ENCODE measurements at regions of chr20 and their contacts with region 1.

Region 1: DNA sequence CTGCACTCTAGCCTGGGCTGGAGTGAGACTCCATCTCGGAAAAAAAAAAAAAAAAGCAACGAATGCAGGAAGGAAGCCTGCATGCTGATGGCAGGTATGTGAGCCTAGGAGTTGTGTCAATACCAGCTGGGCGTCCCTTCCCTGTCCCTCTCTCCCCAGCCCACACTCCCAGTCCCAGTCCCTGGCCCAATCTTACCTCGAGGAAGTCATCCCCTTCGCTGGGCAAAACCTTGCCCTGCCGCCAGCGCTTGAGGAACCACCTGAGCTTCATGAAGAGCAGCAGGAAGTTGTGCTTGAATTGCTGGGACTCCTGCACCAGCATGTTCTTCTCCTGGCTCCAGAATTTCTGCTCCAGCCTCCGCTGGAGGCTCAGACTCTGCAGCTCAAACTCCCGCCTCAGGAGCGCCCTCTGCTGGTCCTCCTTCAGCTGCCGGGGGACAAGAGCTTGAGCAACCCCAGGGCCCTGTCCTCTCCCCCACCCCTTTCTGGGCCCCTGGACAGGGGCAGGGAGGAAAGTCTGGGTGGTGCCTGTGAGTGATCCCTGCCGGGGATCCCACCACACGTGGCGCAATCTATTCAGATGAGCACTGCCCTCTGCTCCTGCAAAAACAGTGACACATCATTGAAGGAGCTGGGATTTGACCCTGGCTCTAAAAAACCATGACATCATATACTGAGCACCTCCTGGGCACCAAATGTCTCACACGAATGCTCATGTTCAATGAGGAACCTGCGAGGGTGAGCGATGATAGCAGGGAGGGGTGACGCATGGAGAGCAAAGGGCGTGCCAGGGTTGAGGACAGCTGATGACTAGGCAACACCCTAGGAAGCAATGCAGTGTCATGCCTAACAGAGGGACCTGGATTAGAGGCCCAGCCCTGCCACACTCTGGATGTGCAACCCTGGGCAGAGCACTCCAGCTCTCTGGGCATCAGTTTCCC is 35.0 kb upstream of the DSN1 start:
- DNase-seq: peak; percentile 81 to 84
- H3K4me3 ChIP-seq: no peak overlapping the region
- H3K4me3 Mint-ChIP-seq: no peak overlapping the region
- H3K27ac Mint-ChIP-seq: no peak overlapping the region
- H3K4me1 ChIP-seq: peaks cover 5% of the 10 kb centered on the region; the same call in 1 of the 2 replicates
- H3K4me1 Mint-ChIP-seq: peaks cover under 1% of the 10 kb centered on the region
- H3K27me3 ChIP-seq: no peaks in the 10 kb centered on the region
- H3K27me3 Mint-ChIP-seq: no peaks in the 10 kb centered on the region
- CTCF ChIP-seq: peak; percentile 92 to 98

Region 2: GRCh38 chr20:36682311-36682710 is 126.3 kb before region 1 on chr20:
- CTCF ChIA-PET with region 1: no interaction called
- POLR2A ChIA-PET with region 1: no interaction called
- intact Hi-C with region 1: no loop called
- DNase-seq: no peak
- H3K4me3 ChIP-seq: no peak overlapping the region
- H3K4me3 Mint-ChIP-seq: no peak overlapping the region
- H3K27ac Mint-ChIP-seq: no peak overlapping the region
- H3K4me1 ChIP-seq: no peaks in the 10 kb centered on the region
- H3K4me1 Mint-ChIP-seq: peaks cover 5% of the 10 kb centered on the region
- H3K27me3 ChIP-seq: no peaks in the 10 kb centered on the region
- H3K27me3 Mint-ChIP-seq: no peaks in the 10 kb centered on the region
- CTCF ChIP-seq: no peak

Region 3: GRCh38 chr20:36792422-36792821 is 16.2 kb before region 1 on chr20:
- CTCF ChIA-PET with region 1: interaction called, 21 read pairs
- POLR2A ChIA-PET with region 1: interaction called, 6 read pairs
- intact Hi-C with region 1: no loop called
- DNase-seq: peak; percentile 94 to 95
- H3K4me3 ChIP-seq: no peak overlapping the region
- H3K4me3 Mint-ChIP-seq: no peak overlapping the region
- H3K27ac Mint-ChIP-seq: no peak overlapping the region
- H3K4me1 ChIP-seq: no peaks in the 10 kb centered on the region
- H3K4me1 Mint-ChIP-seq: no peaks in the 10 kb centered on the region
- H3K27me3 ChIP-seq: no peaks in the 10 kb centered on the region
- H3K27me3 Mint-ChIP-seq: no peaks in the 10 kb centered on the region
- CTCF ChIP-seq: peak; percentile 67 to 92

Region 4: DNA sequence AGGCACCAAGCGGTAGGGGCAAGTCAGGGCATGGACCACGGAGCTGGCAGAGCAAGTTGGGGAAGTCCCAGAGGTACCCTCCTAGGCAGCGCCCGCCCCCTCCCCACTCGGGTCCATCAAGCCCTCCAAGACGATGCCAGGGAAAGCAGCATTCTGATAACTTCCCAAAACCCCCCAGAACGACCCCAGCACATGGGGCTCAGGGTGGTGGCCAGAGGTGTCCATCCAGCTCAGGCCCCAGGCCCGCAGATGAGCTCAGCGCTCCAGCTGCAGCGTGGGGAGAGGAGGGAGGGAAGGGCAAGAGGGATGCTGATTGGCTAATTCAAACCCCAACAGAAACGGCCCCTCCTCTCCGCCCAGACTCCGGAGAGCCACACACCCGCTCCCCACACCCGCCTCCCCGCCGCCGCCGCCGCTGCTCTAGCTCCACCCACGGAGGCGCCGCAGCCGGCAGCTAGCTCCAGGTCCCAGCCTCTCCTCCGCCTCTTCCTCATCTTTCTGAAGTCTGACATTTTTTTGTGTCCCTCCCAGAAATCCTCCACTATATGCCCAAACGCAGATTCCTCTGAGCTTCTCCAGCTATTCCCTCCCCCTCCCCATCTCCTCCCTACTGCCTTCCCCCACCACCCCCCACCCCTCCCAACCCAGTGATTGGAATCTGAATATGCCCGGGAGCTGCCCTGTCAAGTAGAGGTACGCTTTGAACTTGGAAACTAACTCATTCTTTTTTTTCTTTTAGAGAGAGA is 27.0 kb after region 1 on chr20:
- CTCF ChIA-PET with region 1: interaction called, 14 read pairs
- POLR2A ChIA-PET with region 1: no interaction called
- intact Hi-C with region 1: no loop called
- DNase-seq: peak; percentile 84 to 90
- H3K4me3 ChIP-seq: no peak overlapping the region
- H3K4me3 Mint-ChIP-seq: peak overlapping the region; percentile 63
- H3K27ac Mint-ChIP-seq: peak overlapping the region; percentile 86
- H3K4me1 ChIP-seq: peaks cover 4% of the 10 kb centered on the region; the same call in 1 of the 2 replicates
- H3K4me1 Mint-ChIP-seq: peaks cover 8% of the 10 kb centered on the region
- H3K27me3 ChIP-seq: no peaks in the 10 kb centered on the region
- H3K27me3 Mint-ChIP-seq: no peaks in the 10 kb centered on the region
- CTCF ChIP-seq: no peak